PC-9 (cell line): ENCODE measurements at regions of chr16 and their contacts with region 1.

Region 1: GRCh38 chr16:1342526-1343427 is 8.9 kb downstream of the TSR3 start:
- DNase-seq: peak; percentile 90 to 98
- H3K4me3 ChIP-seq: no peak overlapping the region
- H3K27ac ChIP-seq: no peak overlapping the region
- H3K4me1 ChIP-seq: 0 out of 2 replicates have a peak, but pooled peaks cover 5% of the 10 kb centered on the region
- H3K27me3 ChIP-seq: no peaks in the 10 kb centered on the region
- CTCF ChIP-seq: no peak

Region 2: GRCh38 chr16:1331712-1332617 is 10.8 kb before region 1 on chr16:
- CTCF ChIA-PET with region 1: no interaction called
- POLR2A ChIA-PET with region 1: interaction called, 20 read pairs
- intact Hi-C with region 1: no loop called
- DNase-seq: peak; percentile 82 to 92
- H3K4me3 ChIP-seq: peak overlapping the region; percentile 49; the same call in 1 of the 2 replicates
- H3K27ac ChIP-seq: no peak overlapping the region
- H3K4me1 ChIP-seq: peaks cover 15% of the 10 kb centered on the region
- H3K27me3 ChIP-seq: no peaks in the 10 kb centered on the region
- CTCF ChIP-seq: no peak

Region 3: GRCh38 chr16:1379304-1380076 is 36.7 kb after region 1 on chr16:
- CTCF ChIA-PET with region 1: no interaction called
- POLR2A ChIA-PET with region 1: interaction called, 12 read pairs
- intact Hi-C with region 1: no loop called
- DNase-seq: peak in 1 of 2 experiments; percentile 75
- H3K4me3 ChIP-seq: peak overlapping the region; percentile 80
- H3K27ac ChIP-seq: peak overlapping the region; percentile 94
- H3K4me1 ChIP-seq: peaks cover 21% of the 10 kb centered on the region
- H3K27me3 ChIP-seq: no peaks in the 10 kb centered on the region
- CTCF ChIP-seq: no peak; the same call in 1 of the 2 replicates

Region 4: DNA sequence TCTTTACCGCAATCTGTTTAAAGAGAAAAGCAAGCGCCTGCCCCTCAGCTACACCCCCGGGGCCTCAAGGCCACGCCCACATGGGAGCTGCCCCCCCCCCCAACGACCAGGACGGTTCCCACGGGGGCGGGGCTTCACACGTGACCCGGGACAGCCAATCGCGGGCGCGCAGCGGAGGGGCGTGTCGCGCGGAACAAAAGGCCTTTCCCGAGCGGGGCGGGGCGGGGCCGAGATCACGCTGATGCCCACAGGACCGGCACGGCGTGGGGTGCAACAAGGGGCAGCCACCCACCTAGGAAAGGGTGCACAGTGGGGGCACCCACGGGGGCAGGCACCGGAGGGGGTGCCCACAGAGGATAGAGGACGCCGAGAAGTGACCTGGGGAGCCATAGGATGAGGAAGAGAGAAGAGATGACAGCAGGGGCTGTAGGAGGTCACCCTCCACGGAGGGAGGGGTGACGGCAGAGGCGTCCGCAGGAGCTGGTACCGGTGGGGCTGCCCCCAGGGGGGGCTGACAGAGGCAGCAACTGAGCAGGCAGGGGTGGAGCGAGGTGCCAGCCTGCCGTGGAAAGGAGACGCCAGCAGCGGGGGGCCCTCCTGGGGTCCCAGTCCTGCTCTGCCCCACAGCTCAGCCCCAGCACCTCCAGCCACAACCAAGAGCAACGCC is 65.5 kb after region 1 on chr16:
- CTCF ChIA-PET with region 1: no interaction called
- POLR2A ChIA-PET with region 1: interaction called, 60 read pairs
- intact Hi-C with region 1: no loop called
- DNase-seq: peak; percentile 69 to 97
- H3K4me3 ChIP-seq: peak overlapping the region; percentile 61
- H3K27ac ChIP-seq: no peak overlapping the region
- H3K4me1 ChIP-seq: peaks cover 9% of the 10 kb centered on the region; the same call in 1 of the 2 replicates
- H3K27me3 ChIP-seq: no peaks in the 10 kb centered on the region
- CTCF ChIP-seq: no peak

Region 5: GRCh38 chr16:1959269-1960049 is 616.7 kb after region 1 on chr16 and contains the start of gene NDUFB10:
- CTCF ChIA-PET with region 1: no interaction called
- POLR2A ChIA-PET with region 1: interaction called, 20 read pairs
- intact Hi-C with region 1: no loop called
- DNase-seq: peak; percentile 72 to 96
- H3K4me3 ChIP-seq: peak within 1 kb of the TSS; percentile 95
- H3K27ac ChIP-seq: peak within 1 kb of the TSS; percentile 1; the same call in 1 of the 2 replicates
- H3K4me1 ChIP-seq: peaks cover 12% of the 10 kb centered on the region
- H3K27me3 ChIP-seq: no peaks in the 10 kb centered on the region
- CTCF ChIP-seq: peak; percentile 68; the same call in 1 of the 2 replicates
- total RNA-seq, gene NDUFB10: 181 and 190 TPM in 2 replicates